PC-3 (cell line): ENCODE measurements at regions of chr1 and their contacts with region 1.

Region 1: GRCh38 chr1:162056043-162056442 is 13.4 kb upstream of the NOS1AP start:
- DNase-seq: peak; percentile 89
- ATAC-seq: peak; percentile 68
- H3K4me3 ChIP-seq: no peak overlapping the region
- H3K27ac ChIP-seq: no peak overlapping the region
- H3K4me1 ChIP-seq: peaks cover 16% of the 10 kb centered on the region
- H3K27me3 ChIP-seq: no peaks in the 10 kb centered on the region
- CTCF ChIP-seq: peak; percentile 98

Region 2: GRCh38 chr1:162222014-162222413 is 166.0 kb after region 1 on chr1:
- CTCF ChIA-PET with region 1: no interaction called
- POLR2A ChIA-PET with region 1: no interaction called
- intact Hi-C with region 1: loop called (anchors 5 kb)
- DNase-seq: no peak
- ATAC-seq: no peak
- H3K4me3 ChIP-seq: no peak overlapping the region
- H3K27ac ChIP-seq: no peak overlapping the region
- H3K4me1 ChIP-seq: peaks cover 25% of the 10 kb centered on the region
- H3K27me3 ChIP-seq: no peaks in the 10 kb centered on the region
- CTCF ChIP-seq: no peak

Region 3: DNA sequence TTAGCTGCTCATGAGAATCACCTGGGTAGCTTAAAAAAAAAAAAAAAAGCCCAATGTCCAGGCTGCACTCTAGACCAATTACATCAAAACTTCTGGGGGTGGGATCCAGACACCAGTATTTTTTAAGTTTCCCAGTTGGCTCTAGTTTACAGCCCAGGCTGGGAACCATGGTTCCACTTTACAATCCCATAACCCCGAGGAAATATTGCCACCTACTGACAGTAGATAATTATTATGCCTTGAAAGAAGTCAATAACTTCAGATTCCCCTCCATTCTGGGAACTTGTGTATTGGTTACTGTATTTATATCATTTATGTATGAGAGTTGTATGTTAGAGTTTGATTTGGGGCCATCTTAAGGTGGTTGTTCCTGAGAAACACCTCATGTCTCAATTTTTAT is 220.4 kb after region 1 on chr1:
- CTCF ChIA-PET with region 1: interaction called, 9 read pairs
- POLR2A ChIA-PET with region 1: no interaction called
- intact Hi-C with region 1: loop called (anchors 1 kb)
- DNase-seq: peak; percentile 84
- ATAC-seq: peak; percentile 68
- H3K4me3 ChIP-seq: no peak overlapping the region
- H3K27ac ChIP-seq: no peak overlapping the region
- H3K4me1 ChIP-seq: no peaks in the 10 kb centered on the region
- H3K27me3 ChIP-seq: no peaks in the 10 kb centered on the region
- CTCF ChIP-seq: peak; percentile 91

Region 4: GRCh38 chr1:162497723-162498500 is 441.9 kb after region 1 on chr1 and contains the start of gene UHMK1:
- CTCF ChIA-PET with region 1: no interaction called
- POLR2A ChIA-PET with region 1: no interaction called
- intact Hi-C with region 1: loop called (anchors 5 kb)
- DNase-seq: peak; percentile 91
- ATAC-seq: peak; percentile 93
- H3K4me3 ChIP-seq: peak within 1 kb of the TSS; percentile 77
- H3K27ac ChIP-seq: peak within 1 kb of the TSS; percentile 51
- H3K4me1 ChIP-seq: peaks cover 37% of the 10 kb centered on the region
- H3K27me3 ChIP-seq: no peaks in the 10 kb centered on the region
- CTCF ChIP-seq: no peak
- total RNA-seq, gene UHMK1: 69.4 and 70.4 TPM in 2 replicates